Naive thymus-derived CD4-positive, alpha-beta T cell (primary cell): ENCODE measurements at regions of chr12 and their contacts with region 1.

Region 1: GRCh38 chr12:27014085-27014858 is at the start of gene TM7SF3:
- DNase-seq: peak; percentile 96 to 98 (median 97)
- ATAC-seq: peak; percentile 95
- H3K4me3 ChIP-seq: peak within 1 kb of the TSS; percentile 92
- H3K4me3 Mint-ChIP-seq: peak within 1 kb of the TSS; percentile 80 to 97 (median 94)
- H3K27ac ChIP-seq: peak within 1 kb of the TSS; percentile 84
- H3K27ac Mint-ChIP-seq: peak within 1 kb of the TSS; percentile 88 to 97 (median 96)
- H3K4me1 ChIP-seq: peaks cover 24 to 29% of the 10 kb centered on the region in 2 donors
- H3K4me1 Mint-ChIP-seq: peaks cover 22 to 60% (median 51%) of the 10 kb centered on the region in 7 donors
- H3K27me3 ChIP-seq: no peaks in the 10 kb centered on the region
- H3K27me3 Mint-ChIP-seq: no peaks in the 10 kb centered on the region
- total RNA-seq, gene TM7SF3: 24.4 to 57.3 (median 28.5) TPM

Region 2: GRCh38 chr12:25386831-25387731 is 1627.2 kb before region 1 on chr12:
- CTCF ChIA-PET with region 1: no interaction called
- POLR2A ChIA-PET with region 1: no interaction called
- intact Hi-C with region 1: no loop called
- DNase-seq: peak; percentile 48 to 86 (median 83)
- ATAC-seq: peak; percentile 18
- H3K4me3 ChIP-seq: peak overlapping the region; percentile 97
- H3K4me3 Mint-ChIP-seq: peak overlapping the region; percentile 90 to 100 (median 96)
- H3K27ac ChIP-seq: peak overlapping the region; percentile 98
- H3K27ac Mint-ChIP-seq: peak overlapping the region; percentile 91 to 100 (median 100)
- H3K4me1 ChIP-seq: peaks cover 19 to 24% of the 10 kb centered on the region in 2 donors
- H3K4me1 Mint-ChIP-seq: peaks cover 13 to 61% (median 35%) of the 10 kb centered on the region in 7 donors
- H3K27me3 ChIP-seq: no peaks in the 10 kb centered on the region
- H3K27me3 Mint-ChIP-seq: peaks cover 0 to 2% (median 0%) of the 10 kb centered on the region in 5 donors

Region 3: DNA sequence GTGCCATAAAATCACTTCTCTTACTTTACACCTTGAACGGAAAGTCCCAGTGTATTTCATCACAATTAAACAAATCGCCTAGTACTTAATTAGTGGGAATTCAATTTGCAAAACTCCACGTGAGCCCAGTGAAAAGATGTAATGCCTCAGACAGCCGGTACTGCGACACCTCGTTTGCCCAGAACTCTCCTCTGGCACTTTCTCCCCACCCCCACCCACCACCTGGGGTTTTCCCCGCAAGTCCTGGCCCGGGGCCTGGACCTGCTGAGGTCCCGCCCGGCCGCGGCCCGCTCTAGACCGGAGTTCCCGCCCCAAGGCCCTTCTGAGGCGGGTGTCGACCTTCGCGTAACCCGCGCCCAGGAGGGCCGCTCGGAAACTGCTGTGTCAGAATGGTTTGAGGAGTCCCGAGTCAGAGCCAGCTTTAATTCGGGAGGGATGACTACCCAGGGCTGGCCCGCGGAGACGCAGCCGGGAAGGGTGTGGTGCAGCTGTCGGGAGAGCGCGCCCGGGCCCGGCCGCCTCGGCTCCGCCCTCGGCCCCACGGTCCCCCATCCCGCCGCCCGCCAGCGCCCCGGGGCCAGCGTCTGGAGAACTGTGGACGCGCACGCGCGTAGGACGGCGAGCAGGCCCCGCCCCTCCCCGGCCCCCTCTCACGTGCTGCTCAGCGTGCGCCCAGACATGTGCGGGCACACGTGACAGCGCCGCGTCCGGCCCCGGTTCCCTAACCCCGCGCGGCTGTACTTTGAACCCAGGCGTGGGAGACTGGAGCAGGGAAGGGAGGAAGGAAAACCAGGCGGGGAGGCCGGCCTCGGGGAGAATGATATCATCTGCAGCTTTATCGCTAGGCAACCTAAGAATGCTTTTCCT is 900.2 kb before region 1 on chr12:
- CTCF ChIA-PET with region 1: no interaction called
- POLR2A ChIA-PET with region 1: interaction called, 3 read pairs
- intact Hi-C with region 1: loop called (anchors 1 to 10 kb)
- DNase-seq: peak; percentile 48 to 70 (median 65)
- ATAC-seq: peak; percentile 88
- H3K4me3 ChIP-seq: peak overlapping the region; percentile 53
- H3K4me3 Mint-ChIP-seq: peak overlapping the region; percentile 72 to 90 (median 82)
- H3K27ac ChIP-seq: peak overlapping the region; percentile 54
- H3K27ac Mint-ChIP-seq: peak overlapping the region in 7 of 9 donors; percentile 44 to 83 (median 63)
- H3K4me1 ChIP-seq: peaks cover 0 to 5% of the 10 kb centered on the region in 2 donors
- H3K4me1 Mint-ChIP-seq: peaks cover 5 to 14% (median 8%) of the 10 kb centered on the region in 7 donors
- H3K27me3 ChIP-seq: no peaks in the 10 kb centered on the region
- H3K27me3 Mint-ChIP-seq: peaks cover 2 to 80% (median 32%) of the 10 kb centered on the region in 5 donors

Region 4: GRCh38 chr12:26318661-26319068 is 695.6 kb before region 1 on chr12:
- CTCF ChIA-PET with region 1: no interaction called
- POLR2A ChIA-PET with region 1: no interaction called
- intact Hi-C with region 1: no loop called
- DNase-seq: no peak
- ATAC-seq: no peak
- H3K4me3 ChIP-seq: no peak overlapping the region
- H3K4me3 Mint-ChIP-seq: no peak overlapping the region
- H3K27ac ChIP-seq: no peak overlapping the region
- H3K27ac Mint-ChIP-seq: no peak overlapping the region
- H3K4me1 ChIP-seq: no peaks in the 10 kb centered on the region
- H3K4me1 Mint-ChIP-seq: no peaks in the 10 kb centered on the region
- H3K27me3 ChIP-seq: no peaks in the 10 kb centered on the region
- H3K27me3 Mint-ChIP-seq: peaks cover 10 to 28% (median 13%) of the 10 kb centered on the region in 5 donors

Region 5: DNA sequence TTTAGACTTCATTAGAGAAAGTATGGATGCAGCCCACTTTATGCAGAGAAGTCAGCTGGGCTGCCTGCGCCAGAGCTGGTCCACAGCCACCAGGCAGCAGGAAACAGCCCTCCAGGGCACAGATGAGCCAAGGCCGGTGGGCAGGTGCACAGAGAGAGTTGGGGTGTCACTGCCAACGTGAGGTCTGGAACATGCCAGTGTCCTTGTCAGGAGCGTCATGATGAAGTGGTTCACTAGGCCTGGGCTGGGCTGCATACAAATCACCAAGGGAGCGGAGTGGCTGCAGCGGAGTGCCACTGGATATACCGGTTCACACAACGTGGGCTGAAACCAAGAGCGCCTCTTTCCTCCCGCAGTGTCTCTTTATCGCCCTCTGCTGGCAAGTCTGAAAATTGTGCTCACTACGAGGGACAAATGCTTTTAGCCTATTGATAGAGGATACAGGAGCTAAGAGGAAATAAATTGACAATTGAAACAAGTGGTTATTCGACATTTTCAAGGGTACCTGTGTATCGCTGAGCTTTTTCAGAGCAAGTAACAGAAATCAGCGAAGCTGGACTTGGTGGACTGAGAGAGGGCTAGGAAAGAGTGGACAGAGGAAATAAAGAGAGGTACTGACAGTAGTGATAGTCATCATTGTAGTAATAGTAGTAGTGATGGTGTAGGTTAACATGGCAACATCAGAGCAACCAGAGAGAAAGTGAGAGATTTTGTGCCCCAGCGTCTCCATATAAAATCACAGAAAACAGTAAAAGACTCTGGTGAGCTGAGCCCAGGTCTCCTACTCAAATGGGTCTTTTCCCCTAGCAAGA is 129.3 kb before region 1 on chr12:
- CTCF ChIA-PET with region 1: interaction called, 3 read pairs
- POLR2A ChIA-PET with region 1: no interaction called
- intact Hi-C with region 1: loop called (anchors 1 kb)
- DNase-seq: peak; percentile 62 to 88 (median 81)
- ATAC-seq: peak; percentile 99
- H3K4me3 ChIP-seq: peak overlapping the region; percentile 46
- H3K4me3 Mint-ChIP-seq: peak overlapping the region; percentile 46 to 80 (median 64)
- H3K27ac ChIP-seq: no peak overlapping the region
- H3K27ac Mint-ChIP-seq: no peak overlapping the region
- H3K4me1 ChIP-seq: peaks cover 0 to 3% of the 10 kb centered on the region in 2 donors
- H3K4me1 Mint-ChIP-seq: peaks cover 4 to 13% (median 7%) of the 10 kb centered on the region in 7 donors
- H3K27me3 ChIP-seq: no peaks in the 10 kb centered on the region
- H3K27me3 Mint-ChIP-seq: peaks cover 3 to 26% (median 6%) of the 10 kb centered on the region in 5 donors

Region 6: DNA sequence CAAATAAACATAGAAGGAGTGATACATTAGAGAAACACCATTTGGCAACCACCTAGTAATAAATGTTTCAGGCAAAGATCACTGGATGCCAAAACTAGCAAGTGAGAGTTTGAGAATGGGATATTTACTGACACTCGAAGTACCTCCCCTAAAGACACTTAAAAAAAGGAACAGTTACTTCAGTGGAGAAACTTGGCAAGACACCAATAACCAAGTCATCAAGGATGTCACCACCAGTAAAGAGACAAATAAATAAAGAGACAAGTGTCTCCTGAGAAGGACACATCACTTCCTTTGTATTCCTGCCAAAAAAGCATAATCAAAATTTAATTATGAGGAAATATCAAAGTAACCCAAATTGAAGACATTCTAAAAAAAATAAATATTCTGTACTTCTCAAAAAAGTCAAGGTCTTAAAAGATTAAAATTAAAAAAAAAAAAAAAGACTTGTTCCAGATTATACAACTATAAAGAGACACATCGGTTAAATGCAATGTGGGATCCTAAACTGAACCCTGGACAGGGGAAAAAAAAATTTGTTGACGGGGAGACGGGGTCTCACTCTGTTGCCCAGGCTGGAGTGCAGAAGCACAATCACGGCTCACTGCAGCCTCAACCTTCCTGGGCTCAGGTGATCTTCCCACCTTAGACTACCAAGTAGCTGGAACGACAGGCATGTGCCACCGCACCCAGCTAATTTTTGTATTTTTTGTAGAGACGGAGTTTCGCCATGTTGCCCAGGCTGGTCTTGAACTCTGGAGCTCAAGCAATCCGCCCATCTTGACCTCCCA is 26.4 kb before region 1 on chr12:
- CTCF ChIA-PET with region 1: no interaction called
- POLR2A ChIA-PET with region 1: no interaction called
- intact Hi-C with region 1: no loop called
- DNase-seq: no peak
- ATAC-seq: peak; percentile 55
- H3K4me3 ChIP-seq: no peak overlapping the region
- H3K4me3 Mint-ChIP-seq: no peak overlapping the region
- H3K27ac ChIP-seq: no peak overlapping the region
- H3K27ac Mint-ChIP-seq: no peak overlapping the region
- H3K4me1 ChIP-seq: no peaks in the 10 kb centered on the region
- H3K4me1 Mint-ChIP-seq: peaks cover 0 to 29% (median 5%) of the 10 kb centered on the region in 7 donors
- H3K27me3 ChIP-seq: no peaks in the 10 kb centered on the region
- H3K27me3 Mint-ChIP-seq: no peaks in the 10 kb centered on the region

Region 7: DNA sequence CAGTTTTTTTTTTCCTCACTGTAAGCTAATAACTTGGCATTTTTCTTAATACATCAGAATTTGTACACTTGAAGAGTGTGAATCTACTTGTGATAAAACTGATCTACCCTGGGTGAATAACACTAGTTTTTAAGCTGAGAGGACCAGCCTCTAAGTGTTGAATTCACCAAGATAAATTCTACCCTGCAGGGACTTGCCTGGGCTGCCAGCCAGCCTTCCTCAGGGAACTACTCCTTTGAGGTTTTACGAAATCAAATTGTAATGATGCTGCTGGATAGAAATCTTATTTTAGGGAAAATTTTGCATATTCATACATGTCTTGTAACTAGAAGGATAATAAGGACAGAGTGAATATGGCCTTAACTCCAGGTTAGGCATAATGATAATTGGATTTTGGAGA is 10.0 kb after region 1 on chr12:
- CTCF ChIA-PET with region 1: interaction called, 4 read pairs
- POLR2A ChIA-PET with region 1: interaction called, 34 read pairs
- intact Hi-C with region 1: loop called (anchors 1 kb)
- DNase-seq: no peak
- ATAC-seq: no peak
- H3K4me3 ChIP-seq: no peak overlapping the region
- H3K4me3 Mint-ChIP-seq: peak overlapping the region; percentile 34 to 100 (median 96)
- H3K27ac ChIP-seq: no peak overlapping the region
- H3K27ac Mint-ChIP-seq: no peak overlapping the region
- H3K4me1 ChIP-seq: peaks cover 17 to 25% of the 10 kb centered on the region in 2 donors
- H3K4me1 Mint-ChIP-seq: peaks cover 28 to 47% (median 43%) of the 10 kb centered on the region in 7 donors
- H3K27me3 ChIP-seq: no peaks in the 10 kb centered on the region
- H3K27me3 Mint-ChIP-seq: peaks cover 0 to 4% (median 0%) of the 10 kb centered on the region in 5 donors

Region 8: DNA sequence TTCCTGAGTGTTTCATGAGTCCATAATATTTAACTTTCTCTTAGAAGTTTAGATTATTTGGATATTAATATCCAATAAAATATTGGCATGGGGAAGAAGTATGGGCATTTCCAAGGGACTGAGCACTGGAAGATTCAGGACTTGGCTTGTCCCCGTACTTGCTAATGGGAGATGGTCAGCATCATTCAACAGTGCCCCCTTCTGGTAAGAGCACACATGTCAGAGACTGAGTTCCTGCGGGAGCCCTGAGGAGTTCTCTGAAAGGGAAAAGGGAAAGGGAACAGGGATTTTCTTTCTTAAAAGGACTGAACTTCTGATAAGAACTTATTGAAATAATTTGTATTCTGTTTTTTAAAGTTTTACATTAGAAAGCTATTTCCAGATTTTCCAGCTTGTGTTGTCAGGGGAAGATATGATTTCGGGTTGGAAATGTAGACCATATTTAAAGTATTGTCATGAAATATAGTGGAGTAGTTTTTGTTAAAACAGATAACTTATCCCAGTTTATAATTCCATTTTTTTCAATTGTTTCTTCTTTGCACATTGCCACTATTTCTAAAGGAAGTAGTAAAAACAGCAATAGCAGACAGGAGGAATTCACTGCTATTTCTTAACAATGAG is 127.9 kb after region 1 on chr12:
- CTCF ChIA-PET with region 1: interaction called, 7 read pairs
- POLR2A ChIA-PET with region 1: no interaction called
- intact Hi-C with region 1: loop called (anchors 1 kb)
- DNase-seq: peak in 7 of 9 donors; percentile 7 to 32 (median 15)
- ATAC-seq: peak; percentile 80
- H3K4me3 ChIP-seq: no peak overlapping the region
- H3K4me3 Mint-ChIP-seq: no peak overlapping the region
- H3K27ac ChIP-seq: no peak overlapping the region
- H3K27ac Mint-ChIP-seq: no peak overlapping the region
- H3K4me1 ChIP-seq: no peaks in the 10 kb centered on the region
- H3K4me1 Mint-ChIP-seq: peaks cover 1 to 30% (median 11%) of the 10 kb centered on the region in 7 donors
- H3K27me3 ChIP-seq: no peaks in the 10 kb centered on the region
- H3K27me3 Mint-ChIP-seq: peaks cover 0 to 5% (median 0%) of the 10 kb centered on the region in 5 donors

Region 9: DNA sequence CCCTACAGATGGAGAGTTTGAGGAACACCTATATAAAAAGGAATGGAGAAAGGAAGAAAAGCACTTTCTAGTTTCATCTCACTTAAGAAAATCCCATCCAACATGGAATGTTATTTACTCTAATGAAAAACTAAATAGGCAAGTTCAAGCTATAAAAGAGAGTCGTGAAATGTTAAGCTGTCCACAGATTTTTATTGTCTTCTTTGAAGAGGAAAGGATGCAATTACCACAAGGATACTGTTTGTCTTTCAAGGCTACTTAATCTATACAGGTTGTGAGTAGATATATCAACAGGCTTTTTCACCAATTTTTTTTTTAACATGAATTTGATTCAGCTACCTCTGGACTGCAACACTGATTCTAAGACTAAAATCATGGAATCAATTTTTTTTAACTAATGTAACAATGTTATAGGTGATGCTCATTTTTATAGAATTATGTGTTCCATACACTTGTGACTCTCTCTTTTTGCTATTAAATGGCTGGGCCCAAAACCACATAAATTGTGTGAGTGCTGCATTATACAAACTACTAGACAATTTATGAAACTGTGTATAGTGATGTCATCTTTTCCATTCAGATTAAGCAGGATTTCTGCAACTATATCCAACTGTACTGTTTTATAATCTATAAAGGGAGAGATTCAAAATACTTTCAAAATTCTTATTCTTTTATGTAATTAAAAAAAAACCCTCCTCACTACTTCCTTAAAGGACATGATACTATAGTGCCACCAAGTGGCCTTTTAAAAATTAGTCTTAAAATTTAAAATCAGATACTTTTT is 291.6 kb after region 1 on chr12:
- CTCF ChIA-PET with region 1: interaction called, 22 read pairs
- POLR2A ChIA-PET with region 1: interaction called, 10 read pairs
- intact Hi-C with region 1: loop called (anchors 1 kb)
- DNase-seq: peak in 6 of 9 donors; percentile 20 to 48 (median 34)
- ATAC-seq: no peak
- H3K4me3 ChIP-seq: no peak overlapping the region
- H3K4me3 Mint-ChIP-seq: no peak overlapping the region
- H3K27ac ChIP-seq: no peak overlapping the region
- H3K27ac Mint-ChIP-seq: peak overlapping the region in 6 of 9 donors; percentile 1 to 67 (median 16)
- H3K4me1 ChIP-seq: no peaks in the 10 kb centered on the region
- H3K4me1 Mint-ChIP-seq: peaks cover 0 to 15% (median 0%) of the 10 kb centered on the region in 7 donors
- H3K27me3 ChIP-seq: no peaks in the 10 kb centered on the region
- H3K27me3 Mint-ChIP-seq: no peaks in the 10 kb centered on the region

Region 10: DNA sequence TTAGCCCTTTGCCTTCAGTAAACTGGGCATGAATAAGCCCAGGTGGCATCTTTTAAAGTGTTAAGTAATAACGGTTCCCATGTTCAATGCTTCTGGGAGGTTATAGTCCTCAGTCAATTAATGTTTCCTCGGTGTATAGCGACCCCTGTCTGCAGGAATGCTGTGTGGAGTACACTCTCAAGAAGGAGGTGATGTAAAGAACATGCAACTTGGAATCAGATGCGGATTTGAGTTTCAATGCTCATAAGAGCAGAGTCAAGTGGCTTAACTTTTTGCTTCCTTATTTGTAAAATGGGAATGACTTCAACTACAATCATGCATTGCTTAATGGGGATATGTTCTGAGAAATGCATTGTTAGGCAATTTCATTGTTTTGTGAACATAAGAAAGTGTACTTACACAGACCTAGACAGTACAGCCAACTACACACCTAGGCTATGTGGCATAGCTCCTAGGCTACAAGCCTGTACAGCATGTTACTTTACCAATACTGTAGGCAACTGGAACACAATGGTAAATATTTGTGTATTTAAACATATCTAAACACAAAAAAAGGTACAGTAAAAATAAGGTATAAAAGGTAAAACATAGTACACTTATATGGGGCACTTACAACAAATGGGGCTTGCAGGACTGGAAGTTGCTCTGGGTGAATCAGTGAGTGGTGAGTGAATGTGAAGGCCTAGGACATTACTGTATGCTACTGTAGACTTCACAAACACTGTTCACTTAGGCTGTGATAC is 689.6 kb after region 1 on chr12:
- CTCF ChIA-PET with region 1: interaction called, 4 read pairs
- POLR2A ChIA-PET with region 1: no interaction called
- intact Hi-C with region 1: loop called (anchors 1 kb)
- DNase-seq: peak; percentile 11 to 64 (median 56)
- ATAC-seq: peak; percentile 97
- H3K4me3 ChIP-seq: no peak overlapping the region
- H3K4me3 Mint-ChIP-seq: no peak overlapping the region
- H3K27ac ChIP-seq: no peak overlapping the region
- H3K27ac Mint-ChIP-seq: no peak overlapping the region
- H3K4me1 ChIP-seq: no peaks in the 10 kb centered on the region
- H3K4me1 Mint-ChIP-seq: peaks cover 0 to 3% (median 0%) of the 10 kb centered on the region in 7 donors
- H3K27me3 ChIP-seq: no peaks in the 10 kb centered on the region
- H3K27me3 Mint-ChIP-seq: peaks cover 7 to 22% (median 13%) of the 10 kb centered on the region in 5 donors